ENCODE measurements at regions of chrX and their contacts with region 1.

Region 1: GRCh38 chrX:136028251-136028984 is 43.2 kb downstream of the SLC9A6 start:
- DNase-seq: no peak
- H3K4me3 ChIP-seq: no peak overlapping the region
- H3K27ac ChIP-seq: no peak overlapping the region
- H3K4me1 ChIP-seq: no peaks in the 10 kb centered on the region
- H3K27me3 ChIP-seq: no peaks in the 10 kb centered on the region
- CTCF ChIP-seq: peak in 2 of 3 experiments; percentile 26 to 32; a peak in 2 of 4 replicates
- EP300 ChIP-seq: no peak
- POLR2A ChIP-seq: no peak
- RAD21 ChIP-seq: peak; percentile 62 to 67

Region 2: DNA sequence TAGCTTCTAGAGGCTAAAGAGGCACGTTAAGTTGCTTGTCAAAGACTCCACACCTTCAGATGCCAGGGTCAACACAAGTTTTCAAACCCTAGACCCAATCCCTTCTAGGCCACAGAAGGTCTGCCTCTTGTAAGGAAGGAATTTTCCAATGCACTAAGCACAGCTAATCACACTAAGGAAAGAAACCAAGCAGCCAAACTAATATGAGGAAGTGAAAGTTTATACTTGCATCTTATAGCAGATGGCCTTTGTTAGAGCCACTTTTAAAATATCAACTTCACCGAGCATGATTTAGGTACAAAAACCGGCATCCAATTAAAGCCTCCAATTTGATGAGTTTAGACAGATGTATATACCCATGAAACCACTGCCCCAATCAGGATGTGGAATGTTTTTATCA is 128.8 kb after region 1 on chrX:
- CTCF ChIA-PET with region 1: interaction called, 41 read pairs
- POLR2A ChIA-PET with region 1: no interaction called
- DNase-seq: no peak
- H3K4me3 ChIP-seq: no peak overlapping the region
- H3K27ac ChIP-seq: no peak overlapping the region
- H3K4me1 ChIP-seq: no peaks in the 10 kb centered on the region
- H3K27me3 ChIP-seq: no peaks in the 10 kb centered on the region
- CTCF ChIP-seq: no peak
- EP300 ChIP-seq: no peak
- POLR2A ChIP-seq: no peak
- RAD21 ChIP-seq: no peak

Region 3: GRCh38 chrX:136162831-136163570 is 134.6 kb after region 1 on chrX:
- CTCF ChIA-PET with region 1: interaction called, 41 read pairs
- POLR2A ChIA-PET with region 1: no interaction called
- DNase-seq: peak in 1 of 2 experiments; percentile 71
- H3K4me3 ChIP-seq: no peak overlapping the region
- H3K27ac ChIP-seq: no peak overlapping the region
- H3K4me1 ChIP-seq: no peaks in the 10 kb centered on the region; a peak in 2 of 7 replicates
- H3K27me3 ChIP-seq: no peaks in the 10 kb centered on the region
- CTCF ChIP-seq: peak; percentile 72 to 76 (median 73)
- EP300 ChIP-seq: no peak
- POLR2A ChIP-seq: no peak
- RAD21 ChIP-seq: peak; percentile 77 to 79

Region 4: DNA sequence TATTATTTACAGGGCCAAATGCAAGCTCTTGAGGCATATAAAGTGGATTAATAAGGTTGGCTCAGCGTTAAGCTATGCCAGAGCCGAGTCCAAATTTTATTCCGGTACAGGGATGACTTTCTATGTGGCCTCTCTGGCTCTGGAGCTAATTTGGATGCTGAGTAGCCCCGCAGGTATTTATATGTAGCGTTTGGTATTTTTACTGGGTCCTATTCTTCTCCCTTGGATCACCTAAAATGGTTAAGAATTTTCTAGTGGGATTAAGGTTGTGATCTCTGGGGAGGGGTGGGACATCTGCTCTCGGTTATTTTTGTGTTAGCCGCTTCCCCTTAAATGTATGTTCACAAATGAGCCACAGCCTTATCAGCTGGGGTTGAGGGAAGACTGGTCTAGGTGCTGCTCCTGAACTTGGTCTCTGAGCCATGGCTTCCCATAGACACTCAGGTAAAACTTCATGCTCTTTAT is 168.3 kb after region 1 on chrX:
- CTCF ChIA-PET with region 1: interaction called, 17 read pairs
- POLR2A ChIA-PET with region 1: no interaction called
- DNase-seq: no peak
- H3K4me3 ChIP-seq: no peak overlapping the region
- H3K27ac ChIP-seq: no peak overlapping the region
- H3K4me1 ChIP-seq: peaks cover 0 to 2% (median 0%) of the 10 kb centered on the region in 4 experiments; a peak in 1 of 7 replicates
- H3K27me3 ChIP-seq: no peaks in the 10 kb centered on the region
- CTCF ChIP-seq: no peak
- EP300 ChIP-seq: no peak
- POLR2A ChIP-seq: no peak
- RAD21 ChIP-seq: no peak

Region 5: GRCh38 chrX:136209016-136209738 is 180.8 kb after region 1 on chrX:
- CTCF ChIA-PET with region 1: interaction called, 32 read pairs
- POLR2A ChIA-PET with region 1: no interaction called
- DNase-seq: no peak
- H3K4me3 ChIP-seq: no peak overlapping the region
- H3K27ac ChIP-seq: no peak overlapping the region
- H3K4me1 ChIP-seq: peaks cover 0 to 7% (median 3%) of the 10 kb centered on the region in 4 experiments; a peak in 2 of 7 replicates
- H3K27me3 ChIP-seq: no peaks in the 10 kb centered on the region
- CTCF ChIP-seq: peak; percentile 40 to 52 (median 48)
- EP300 ChIP-seq: no peak
- POLR2A ChIP-seq: no peak
- RAD21 ChIP-seq: peak; percentile 63 to 71